A673 (cell line): ENCODE measurements at regions of chr16 and their contacts with region 1.

Region 1: DNA sequence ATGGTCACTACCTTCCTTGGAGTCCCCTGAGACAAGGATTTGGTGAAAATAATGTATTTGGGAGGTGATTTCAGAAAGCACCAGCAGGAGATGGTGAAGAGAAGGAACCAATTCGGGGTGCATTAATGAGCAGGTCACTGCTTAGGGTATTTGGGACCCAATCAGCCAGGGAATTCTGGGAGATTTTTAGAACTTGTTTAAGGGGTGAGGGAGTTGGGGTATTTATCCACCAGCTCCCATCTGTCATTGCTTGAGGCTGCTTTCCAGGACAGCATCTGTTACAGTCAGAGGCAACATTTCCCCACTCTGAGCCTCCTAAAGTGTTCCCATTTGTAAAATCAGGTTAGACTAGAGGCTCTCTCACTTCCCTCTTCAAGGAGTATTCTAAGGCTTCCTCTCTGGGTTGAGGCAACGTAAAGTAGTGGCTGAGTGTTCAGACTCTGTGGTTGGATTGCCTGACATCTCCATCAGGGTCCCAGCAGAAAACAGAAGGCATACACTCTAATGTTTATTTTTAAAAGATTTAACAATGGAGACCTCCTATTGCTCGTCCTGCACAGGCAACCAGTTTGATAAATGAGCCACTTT is 60.9 kb downstream of the CLEC19A start:
- DNase-seq: no peak
- H3K4me3 ChIP-seq: no peak overlapping the region
- H3K27ac ChIP-seq: no peak overlapping the region
- H3K4me1 ChIP-seq: no peaks in the 10 kb centered on the region
- H3K27me3 ChIP-seq: peaks cover 16% of the 10 kb centered on the region
- CTCF ChIP-seq: no peak

Region 2: GRCh38 chr16:19323596-19323995 is 22.8 kb before region 1 on chr16:
- CTCF ChIA-PET with region 1: no interaction called
- POLR2A ChIA-PET with region 1: no interaction called
- intact Hi-C with region 1: loop called (anchors 1 kb)
- DNase-seq: no peak
- H3K4me3 ChIP-seq: no peak overlapping the region
- H3K27ac ChIP-seq: no peak overlapping the region
- H3K4me1 ChIP-seq: no peaks in the 10 kb centered on the region
- H3K27me3 ChIP-seq: no peaks in the 10 kb centered on the region
- CTCF ChIP-seq: no peak